Activated CD4-positive, alpha-beta T cell treated with anti-CD3 and anti-CD28 coated beads for 36 hours (primary cell): ENCODE measurements at regions of chr14 and their contacts with region 1.

Region 1: DNA sequence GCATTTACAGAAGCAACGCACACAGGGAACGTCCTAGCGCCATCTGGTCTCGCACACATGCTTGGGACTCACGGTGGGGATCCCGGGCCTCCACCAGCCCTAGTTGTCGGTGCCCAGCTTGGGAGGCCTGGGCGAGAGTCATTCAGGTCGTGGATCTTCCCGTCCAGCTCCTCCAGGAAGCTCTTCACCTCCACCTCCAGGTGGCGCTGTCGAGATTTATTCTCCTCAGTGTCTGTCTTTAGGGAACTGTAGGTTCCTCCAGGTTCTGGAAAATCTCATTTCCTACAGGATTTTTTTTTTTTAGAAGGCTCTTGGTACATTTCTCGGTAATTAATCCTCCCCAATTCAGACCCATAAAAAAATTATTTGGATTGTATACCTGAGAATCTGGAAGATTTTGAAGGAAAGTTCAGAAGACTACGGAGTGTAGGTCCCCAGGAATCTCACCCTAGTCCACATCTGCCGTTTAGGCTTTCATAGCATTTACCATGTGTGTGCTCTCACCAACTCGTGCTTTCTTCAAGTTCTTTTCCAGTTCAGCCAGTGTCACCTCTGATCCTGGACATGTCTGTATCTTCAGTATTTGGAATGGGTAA is 910.0 kb downstream of the TMEM121 start:
- DNase-seq: peak; percentile 84
- ATAC-seq: no peak
- H3K4me3 Mint-ChIP-seq: no peak overlapping the region
- H3K27ac Mint-ChIP-seq: no peak overlapping the region
- H3K4me1 Mint-ChIP-seq: no peaks in the 10 kb centered on the region
- H3K27me3 Mint-ChIP-seq: peaks cover 10% of the 10 kb centered on the region

Region 2: GRCh38 chr14:105312973-105313750 is 1123.2 kb before region 1 on chr14:
- CTCF ChIA-PET with region 1: no interaction called
- POLR2A ChIA-PET with region 1: no interaction called
- intact Hi-C with region 1: no loop called
- DNase-seq: no peak
- ATAC-seq: no peak
- H3K4me3 Mint-ChIP-seq: peak overlapping the region; percentile 63
- H3K27ac Mint-ChIP-seq: peak overlapping the region; percentile 71
- H3K4me1 Mint-ChIP-seq: peaks cover 29% of the 10 kb centered on the region
- H3K27me3 Mint-ChIP-seq: no peaks in the 10 kb centered on the region

Region 3: DNA sequence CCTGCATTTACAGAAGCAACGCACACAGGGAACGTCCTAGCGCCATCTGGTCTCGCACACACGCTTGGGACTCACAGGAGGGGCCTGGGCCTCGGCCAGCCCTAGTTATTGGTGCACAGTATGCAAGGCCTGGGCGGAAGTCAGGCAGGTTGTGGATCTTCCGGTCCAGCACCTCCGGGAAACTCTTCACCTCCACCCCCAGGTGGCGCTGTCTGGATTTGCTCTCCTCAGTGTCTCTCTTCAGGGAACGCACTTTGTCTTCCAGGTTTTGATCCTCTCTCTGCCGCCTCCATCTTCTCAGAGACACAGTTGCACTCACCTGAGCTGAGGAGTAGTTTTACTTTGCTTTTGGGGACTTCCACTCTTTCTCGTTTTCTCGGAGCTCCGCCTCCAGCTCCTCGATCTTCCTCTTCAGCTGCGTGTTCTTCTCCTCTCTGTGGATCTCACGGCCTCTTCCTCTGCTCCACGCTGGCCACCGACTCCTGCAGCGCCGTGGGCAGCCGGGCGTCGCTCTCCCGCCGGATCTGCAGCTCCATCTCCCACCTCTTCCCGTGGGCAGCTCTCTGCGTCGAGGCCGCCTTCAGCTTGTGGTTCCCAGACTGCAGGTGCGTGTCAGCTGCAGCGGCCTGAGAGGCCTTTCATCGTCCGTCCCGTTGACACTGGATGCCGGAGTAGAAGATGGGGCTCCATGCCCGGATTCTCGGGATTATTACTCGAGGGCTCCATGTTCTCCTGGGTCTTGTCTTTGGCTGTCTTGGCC is 23.7 kb after region 1 on chr14:
- CTCF ChIA-PET with region 1: interaction called, 11 read pairs
- POLR2A ChIA-PET with region 1: no interaction called
- intact Hi-C with region 1: no loop called
- DNase-seq: peak; percentile 84
- ATAC-seq: peak; percentile 76
- H3K4me3 Mint-ChIP-seq: no peak overlapping the region
- H3K27ac Mint-ChIP-seq: no peak overlapping the region
- H3K4me1 Mint-ChIP-seq: peaks cover 2% of the 10 kb centered on the region
- H3K27me3 Mint-ChIP-seq: no peaks in the 10 kb centered on the region

Region 4: GRCh38 chr14:106501898-106502297 is 65.5 kb after region 1 on chr14:
- CTCF ChIA-PET with region 1: interaction called, 18 read pairs
- POLR2A ChIA-PET with region 1: no interaction called
- intact Hi-C with region 1: no loop called
- DNase-seq: no peak
- ATAC-seq: peak; percentile 63
- H3K4me3 Mint-ChIP-seq: no peak overlapping the region
- H3K27ac Mint-ChIP-seq: no peak overlapping the region
- H3K4me1 Mint-ChIP-seq: peaks cover 24% of the 10 kb centered on the region
- H3K27me3 Mint-ChIP-seq: no peaks in the 10 kb centered on the region

Region 5: GRCh38 chr14:106518054-106518943 is 81.9 kb after region 1 on chr14:
- CTCF ChIA-PET with region 1: interaction called, 38 read pairs
- POLR2A ChIA-PET with region 1: no interaction called
- intact Hi-C with region 1: loop called in 1 of 2 experiments (anchors 1 kb)
- DNase-seq: peak; percentile 92
- ATAC-seq: peak; percentile 84
- H3K4me3 Mint-ChIP-seq: no peak overlapping the region
- H3K27ac Mint-ChIP-seq: no peak overlapping the region
- H3K4me1 Mint-ChIP-seq: peaks cover 13% of the 10 kb centered on the region
- H3K27me3 Mint-ChIP-seq: no peaks in the 10 kb centered on the region

Region 6: GRCh38 chr14:106538201-106538600 is 101.8 kb after region 1 on chr14:
- CTCF ChIA-PET with region 1: interaction called, 6 read pairs
- POLR2A ChIA-PET with region 1: no interaction called
- intact Hi-C with region 1: loop called in 1 of 2 experiments (anchors 1 kb)
- DNase-seq: no peak
- ATAC-seq: no peak
- H3K4me3 Mint-ChIP-seq: no peak overlapping the region
- H3K27ac Mint-ChIP-seq: no peak overlapping the region
- H3K4me1 Mint-ChIP-seq: peaks cover 6% of the 10 kb centered on the region
- H3K27me3 Mint-ChIP-seq: peaks cover 17% of the 10 kb centered on the region